Activated CD4-positive, alpha-beta T cell treated with anti-CD3 and anti-CD28 coated beads for 36 hours (primary cell): ENCODE measurements at regions of chr7 and their contacts with region 1.

Region 1: DNA sequence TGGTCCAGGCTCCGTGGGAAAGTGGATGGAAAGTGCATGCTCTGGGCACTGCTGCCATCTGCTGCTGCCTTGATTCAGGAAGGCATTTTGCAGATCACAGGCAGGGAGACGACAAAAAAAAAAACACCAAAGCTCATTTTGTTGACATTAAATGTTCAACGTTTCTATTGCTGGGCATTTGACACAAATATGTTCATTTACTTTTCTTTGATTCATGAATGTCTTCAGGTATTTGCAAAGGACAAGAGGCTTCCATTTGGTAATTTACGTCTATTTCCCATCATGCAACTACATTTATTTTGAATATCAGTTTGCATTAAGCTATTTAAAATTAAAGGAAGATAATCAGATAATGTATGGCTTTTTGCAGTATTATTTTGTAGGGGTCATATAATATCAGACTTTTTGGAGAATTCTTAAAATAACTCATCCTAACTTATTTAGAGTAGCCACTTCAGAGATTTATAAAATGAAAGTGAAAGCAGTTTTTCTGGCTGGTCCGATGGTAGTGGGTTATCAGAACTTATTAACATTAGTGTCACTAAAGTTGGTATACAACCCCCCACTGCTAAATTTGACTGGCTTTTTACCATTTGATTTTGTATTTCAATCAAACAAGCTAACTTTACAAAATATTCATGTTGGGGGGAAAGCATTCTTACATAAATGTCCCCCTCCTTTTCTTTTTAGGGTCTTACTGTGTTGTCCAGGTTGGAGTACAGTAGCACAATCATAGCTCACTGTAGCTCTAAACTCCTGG is 65.3 kb downstream of the PDIA4 start:
- DNase-seq: peak; percentile 81
- ATAC-seq: peak; percentile 58
- H3K4me3 Mint-ChIP-seq: peak overlapping the region; percentile 87
- H3K27ac Mint-ChIP-seq: peak overlapping the region; percentile 93
- H3K4me1 Mint-ChIP-seq: peaks cover 28% of the 10 kb centered on the region
- H3K27me3 Mint-ChIP-seq: no peaks in the 10 kb centered on the region

Region 2: GRCh38 chr7:148262721-148263229 is 700.2 kb before region 1 on chr7:
- CTCF ChIA-PET with region 1: interaction called, 5 read pairs
- POLR2A ChIA-PET with region 1: no interaction called
- intact Hi-C with region 1: loop called (anchors 2 to 5 kb)
- DNase-seq: peak; percentile 79
- ATAC-seq: peak; percentile 73
- H3K4me3 Mint-ChIP-seq: peak overlapping the region; percentile 5
- H3K27ac Mint-ChIP-seq: no peak overlapping the region
- H3K4me1 Mint-ChIP-seq: peaks cover 8% of the 10 kb centered on the region
- H3K27me3 Mint-ChIP-seq: peaks cover 20% of the 10 kb centered on the region

Region 3: GRCh38 chr7:148436571-148436970 is 526.4 kb before region 1 on chr7:
- CTCF ChIA-PET with region 1: no interaction called
- POLR2A ChIA-PET with region 1: no interaction called
- intact Hi-C with region 1: no loop called
- DNase-seq: no peak
- ATAC-seq: no peak
- H3K4me3 Mint-ChIP-seq: no peak overlapping the region
- H3K27ac Mint-ChIP-seq: no peak overlapping the region
- H3K4me1 Mint-ChIP-seq: no peaks in the 10 kb centered on the region
- H3K27me3 Mint-ChIP-seq: peaks cover 2% of the 10 kb centered on the region

Region 4: DNA sequence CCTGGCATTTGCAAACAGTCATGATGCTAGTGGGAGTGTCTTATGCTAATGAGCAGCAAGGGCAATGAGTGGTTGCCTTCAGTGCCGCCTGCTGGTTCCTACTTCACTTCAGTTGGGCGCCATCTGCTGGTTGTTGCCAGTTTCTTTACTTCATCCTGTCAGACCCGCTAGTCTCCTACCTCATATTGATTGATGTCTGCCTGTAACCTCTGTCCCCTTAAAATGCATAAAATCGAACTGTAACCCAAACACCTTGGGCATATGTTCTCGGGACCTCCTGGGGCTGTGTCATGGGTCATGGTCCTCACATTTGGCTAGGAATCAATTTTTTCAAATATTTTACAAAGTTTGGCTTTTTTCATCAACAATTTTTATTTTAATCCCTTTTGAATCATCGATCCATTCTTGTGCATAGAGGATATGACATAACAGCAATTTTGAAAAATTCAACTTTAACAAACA is 435.3 kb before region 1 on chr7:
- CTCF ChIA-PET with region 1: no interaction called
- POLR2A ChIA-PET with region 1: no interaction called
- intact Hi-C with region 1: loop called in 1 of 2 experiments (anchors 2 kb)
- DNase-seq: peak; percentile 95
- ATAC-seq: peak; percentile 99
- H3K4me3 Mint-ChIP-seq: no peak overlapping the region
- H3K27ac Mint-ChIP-seq: no peak overlapping the region
- H3K4me1 Mint-ChIP-seq: peaks cover 6% of the 10 kb centered on the region
- H3K27me3 Mint-ChIP-seq: peaks cover 32% of the 10 kb centered on the region

Region 5: DNA sequence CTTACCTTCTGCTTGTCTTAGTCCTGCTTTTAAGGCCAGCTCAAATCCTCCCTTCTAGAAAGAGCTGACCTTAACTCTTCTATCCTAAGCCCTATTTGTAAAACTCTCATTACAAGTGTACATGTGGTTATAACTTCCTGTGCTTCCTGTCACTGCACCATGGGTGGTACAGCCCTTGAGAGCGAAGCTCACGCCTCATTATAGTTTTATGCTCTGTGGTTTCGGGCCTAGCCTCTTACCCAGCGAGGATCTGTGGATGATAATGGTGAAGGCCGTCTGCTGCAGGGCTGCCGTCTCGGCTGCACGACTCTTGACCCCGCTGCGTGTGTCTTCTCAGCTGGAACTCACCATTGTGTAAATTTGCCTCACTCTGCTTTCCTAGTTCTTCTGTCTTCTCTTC is 189.7 kb before region 1 on chr7:
- CTCF ChIA-PET with region 1: interaction called, 9 read pairs
- POLR2A ChIA-PET with region 1: no interaction called
- intact Hi-C with region 1: loop called in 1 of 2 experiments (anchors 5 kb)
- DNase-seq: peak; percentile 41
- ATAC-seq: peak; percentile 80
- H3K4me3 Mint-ChIP-seq: peak overlapping the region; percentile 16
- H3K27ac Mint-ChIP-seq: peak overlapping the region; percentile 77
- H3K4me1 Mint-ChIP-seq: peaks cover 25% of the 10 kb centered on the region
- H3K27me3 Mint-ChIP-seq: no peaks in the 10 kb centered on the region

Region 6: GRCh38 chr7:148856891-148857290 is 106.1 kb before region 1 on chr7:
- CTCF ChIA-PET with region 1: interaction called, 32 read pairs
- POLR2A ChIA-PET with region 1: no interaction called
- intact Hi-C with region 1: loop called (anchors 1 kb)
- DNase-seq: peak; percentile 45
- ATAC-seq: peak; percentile 87
- H3K4me3 Mint-ChIP-seq: peak overlapping the region; percentile 9
- H3K27ac Mint-ChIP-seq: peak overlapping the region; percentile 59
- H3K4me1 Mint-ChIP-seq: peaks cover 42% of the 10 kb centered on the region
- H3K27me3 Mint-ChIP-seq: no peaks in the 10 kb centered on the region

Region 7: DNA sequence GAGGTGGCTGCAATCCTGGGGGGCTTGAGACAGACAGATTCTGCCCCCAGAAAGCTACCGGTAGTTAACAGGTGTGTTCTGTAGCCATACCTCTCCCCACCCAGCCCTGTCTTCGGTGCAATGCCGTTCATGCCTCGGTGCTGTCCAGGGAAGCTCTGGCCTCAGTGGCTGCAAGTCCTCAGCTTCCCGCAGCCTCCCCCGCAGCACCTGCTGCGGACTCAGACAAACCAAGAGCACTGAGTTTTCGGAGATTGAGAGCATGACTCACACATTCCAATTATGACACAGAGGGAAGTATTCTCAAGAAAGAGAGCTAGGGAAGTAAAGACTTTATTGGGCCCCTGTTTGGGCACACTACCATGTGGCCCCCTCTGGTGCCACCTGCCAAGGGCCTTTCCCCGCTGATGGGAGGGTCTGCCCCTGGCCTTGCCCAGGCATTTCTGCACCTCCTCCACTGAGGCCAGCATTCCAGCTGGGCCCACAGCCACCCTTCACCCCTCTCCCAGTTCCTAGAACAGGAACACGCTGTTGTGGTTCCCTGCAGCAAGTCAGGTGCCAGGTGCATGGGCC is 48.7 kb before region 1 on chr7:
- CTCF ChIA-PET with region 1: interaction called, 3 read pairs
- POLR2A ChIA-PET with region 1: no interaction called
- intact Hi-C with region 1: loop called in 1 of 2 experiments (anchors 2 kb)
- DNase-seq: peak; percentile 82
- ATAC-seq: peak; percentile 62
- H3K4me3 Mint-ChIP-seq: peak overlapping the region; percentile 47
- H3K27ac Mint-ChIP-seq: peak overlapping the region; percentile 98
- H3K4me1 Mint-ChIP-seq: peaks cover 73% of the 10 kb centered on the region
- H3K27me3 Mint-ChIP-seq: no peaks in the 10 kb centered on the region

Region 8: GRCh38 chr7:149028346-149029109 is 65.5 kb after region 1 on chr7 and contains the start of gene PDIA4:
- CTCF ChIA-PET with region 1: no interaction called
- POLR2A ChIA-PET with region 1: no interaction called
- intact Hi-C with region 1: loop called in 1 of 2 experiments (anchors 2 kb)
- DNase-seq: peak; percentile 100
- ATAC-seq: peak; percentile 92
- H3K4me3 Mint-ChIP-seq: peak within 1 kb of the TSS; percentile 99
- H3K27ac Mint-ChIP-seq: peak within 1 kb of the TSS; percentile 94
- H3K4me1 Mint-ChIP-seq: peaks cover 32% of the 10 kb centered on the region
- H3K27me3 Mint-ChIP-seq: no peaks in the 10 kb centered on the region
- total RNA-seq, gene PDIA4: 88.3 to 90.1 TPM

Region 9: GRCh38 chr7:149266461-149266860 is 303.5 kb after region 1 on chr7:
- CTCF ChIA-PET with region 1: no interaction called
- POLR2A ChIA-PET with region 1: no interaction called
- intact Hi-C with region 1: no loop called
- DNase-seq: no peak
- ATAC-seq: no peak
- H3K4me3 Mint-ChIP-seq: no peak overlapping the region
- H3K27ac Mint-ChIP-seq: peak overlapping the region; percentile 47
- H3K4me1 Mint-ChIP-seq: peaks cover 28% of the 10 kb centered on the region
- H3K27me3 Mint-ChIP-seq: no peaks in the 10 kb centered on the region